AG04449 (cell line): ENCODE measurements at regions of chr12 and their contacts with region 1.

Region 1: DNA sequence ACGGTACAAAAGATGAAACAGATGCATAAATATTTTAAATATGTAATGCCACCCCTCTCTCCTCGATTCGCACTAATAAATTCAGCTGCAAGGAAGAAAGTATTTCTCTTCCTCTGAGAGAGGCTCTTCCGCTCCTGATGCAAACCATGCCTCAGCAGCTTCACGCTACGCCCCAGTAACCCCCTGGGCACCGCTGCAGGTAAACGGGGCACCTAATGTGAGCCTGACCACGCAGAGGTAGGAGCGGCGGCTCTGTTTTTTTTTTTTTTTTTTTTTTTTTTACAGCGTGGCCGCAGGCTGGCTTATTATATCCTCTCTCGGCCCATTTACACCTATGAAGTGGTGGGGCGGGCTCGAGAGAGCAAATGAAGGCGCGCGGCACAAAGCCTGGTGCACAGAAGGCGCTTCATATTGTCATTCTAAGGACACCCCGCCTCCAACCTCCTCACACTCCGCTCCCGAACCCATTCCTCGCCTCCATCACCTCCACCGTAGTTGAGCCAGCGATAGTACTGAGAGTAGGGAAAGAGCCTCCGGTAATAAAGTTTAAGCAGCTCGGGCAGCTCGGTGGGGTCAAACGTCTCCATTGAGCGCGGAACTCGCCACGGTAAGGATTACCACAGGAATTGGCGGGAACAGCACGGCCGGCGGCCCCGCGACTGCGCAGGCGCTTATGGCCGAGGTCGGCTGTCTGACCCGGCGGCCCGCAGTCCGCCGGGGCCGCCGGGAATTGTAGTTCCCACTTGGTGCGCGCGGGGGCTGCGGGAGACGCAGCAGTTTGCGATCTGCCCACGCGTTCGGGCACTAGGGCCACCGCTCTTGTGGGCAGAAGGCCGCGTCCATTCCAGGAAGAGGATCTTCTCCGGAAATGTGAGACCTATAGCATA is at the start of gene PRIM1:
- DNase-seq: no peak
- H3K4me3 ChIP-seq: peak within 1 kb of the TSS; percentile 96
- CTCF ChIP-seq: no peak

Region 2: GRCh38 chr12:56766535-56766934 is 14.6 kb after region 1 on chr12:
- CTCF ChIA-PET with region 1: interaction called, 28 read pairs
- POLR2A ChIA-PET with region 1: no interaction called
- DNase-seq: no peak
- H3K4me3 ChIP-seq: no peak overlapping the region
- CTCF ChIP-seq: no peak